OCI-LY7 (cell line): ENCODE measurements at regions of chr16 and their contacts with region 1.

Region 1: DNA sequence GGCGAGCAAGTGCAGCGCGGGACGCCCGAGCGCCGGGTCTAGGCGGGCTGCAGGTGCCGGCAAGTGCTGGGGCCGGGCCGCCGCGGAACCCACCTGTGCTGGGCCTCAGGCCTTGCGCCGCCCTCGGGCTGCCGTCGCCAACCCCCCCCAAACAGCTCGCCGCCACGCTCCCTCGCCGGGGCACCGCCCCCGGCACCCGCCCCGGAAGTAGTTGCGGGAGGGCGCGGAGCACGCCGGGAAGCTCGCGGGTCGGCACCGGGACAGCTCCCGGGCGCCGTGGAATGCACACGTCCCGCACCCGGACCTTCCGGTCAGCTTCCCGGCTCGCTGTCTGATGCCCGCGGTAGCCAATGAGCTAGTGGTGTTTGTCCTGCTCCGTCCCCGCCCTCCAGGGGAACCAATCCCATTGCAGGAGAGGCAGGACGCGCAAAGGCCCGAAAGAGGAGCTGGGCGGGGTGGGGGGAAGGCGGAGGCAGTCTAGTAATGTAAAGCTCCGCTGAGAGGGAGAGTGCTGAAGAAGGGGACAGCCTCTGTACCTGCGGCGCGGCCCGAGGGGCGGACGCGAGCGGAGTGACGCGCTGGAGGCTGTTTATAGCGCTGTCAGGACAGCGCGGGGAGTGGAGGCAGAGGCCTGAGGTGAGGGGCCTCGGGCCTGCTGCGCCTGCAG is at the starts of genes ANKS3 and DNAAF8:
- DNase-seq: peak; percentile 82
- H3K4me3 ChIP-seq: peak within 1 kb of the TSS; percentile 89
- H3K27ac ChIP-seq: peak within 1 kb of the TSS; percentile 64
- H3K4me1 ChIP-seq: peaks cover 15% of the 10 kb centered on the region
- CTCF ChIP-seq: no peak
- total RNA-seq, gene ANKS3: 17.6 and 19.5 TPM in 2 replicates
- total RNA-seq, gene DNAAF8: 0.36 and 0.38 TPM in 2 replicates

Region 2: DNA sequence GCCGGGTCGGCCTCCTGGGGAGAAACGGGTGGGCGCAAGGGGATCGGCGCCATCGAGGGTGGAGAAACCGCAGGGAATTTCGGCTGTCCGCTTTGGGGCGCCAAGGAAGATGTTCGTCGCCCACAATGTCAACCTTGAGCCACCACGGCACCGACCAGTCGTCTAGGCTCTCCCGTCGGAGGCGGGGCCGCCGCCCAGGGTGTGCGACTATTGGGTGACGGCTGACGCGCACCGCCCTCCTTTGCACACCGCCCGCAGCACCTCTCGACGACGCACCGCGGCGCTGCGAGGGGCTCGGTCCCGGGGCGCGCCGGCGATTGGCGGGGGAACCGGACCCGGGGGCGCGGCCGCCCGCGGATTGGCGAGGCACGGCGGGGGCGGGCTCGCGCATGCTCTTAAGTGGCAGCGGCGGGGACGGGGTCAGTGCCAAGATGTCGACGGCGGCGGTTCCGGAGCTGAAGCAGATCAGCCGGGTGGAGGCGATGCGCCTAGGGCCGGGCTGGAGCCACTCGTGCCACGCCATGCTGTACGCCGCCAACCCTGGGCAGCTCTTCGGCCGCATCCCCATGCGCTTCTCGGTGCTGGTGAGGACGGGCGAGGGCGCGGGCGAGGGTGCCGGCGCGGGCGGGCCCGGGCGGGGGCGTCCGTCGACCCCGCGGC is 40.8 kb before region 1 on chr16 and contains the start of gene NUDT16L1:
- CTCF ChIA-PET with region 1: no interaction called
- POLR2A ChIA-PET with region 1: no interaction called
- intact Hi-C with region 1: loop called (anchors 2 kb)
- DNase-seq: peak; percentile 97
- H3K4me3 ChIP-seq: peak within 1 kb of the TSS; percentile 90
- H3K27ac ChIP-seq: peak within 1 kb of the TSS; percentile 44
- H3K4me1 ChIP-seq: peaks cover 12% of the 10 kb centered on the region
- CTCF ChIP-seq: 0 out of 2 replicates have a peak, but pooled peaks have one; percentile 36
- total RNA-seq, gene NUDT16L1: 14.9 and 17.8 TPM in 2 replicates

Region 3: DNA sequence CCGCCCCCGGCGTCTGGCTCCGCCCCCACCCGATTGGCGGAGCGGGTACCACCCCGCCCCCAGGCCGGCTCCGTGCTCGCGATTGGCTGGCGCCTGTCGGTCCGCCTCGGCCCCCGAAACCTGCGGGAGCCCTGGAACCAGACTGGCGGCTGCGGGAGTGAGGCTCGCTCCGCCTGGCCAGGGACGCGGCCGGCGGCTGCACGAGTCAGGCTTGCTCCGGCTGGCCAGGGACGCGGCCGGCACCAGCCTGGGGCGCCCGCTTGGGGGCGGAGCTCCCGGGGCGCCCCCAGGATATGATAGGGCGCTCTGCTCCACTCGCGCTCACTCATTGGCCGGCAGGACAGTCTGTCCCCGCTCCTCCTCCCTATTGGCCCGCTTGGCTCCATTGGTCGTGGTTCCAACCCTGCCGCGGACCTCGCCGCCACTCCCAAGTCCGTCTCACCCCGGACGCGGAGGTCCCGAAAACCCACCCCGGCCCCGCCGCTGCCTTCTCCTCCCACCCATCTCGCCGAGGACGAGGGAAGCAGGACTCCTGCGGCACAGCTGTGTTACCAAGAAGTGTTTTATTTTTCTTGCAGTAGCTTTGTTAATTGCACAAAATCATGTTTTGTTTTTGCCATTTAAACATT is 68.6 kb after region 1 on chr16:
- CTCF ChIA-PET with region 1: interaction called, 3 read pairs
- POLR2A ChIA-PET with region 1: no interaction called
- intact Hi-C with region 1: loop called (anchors 2 kb)
- DNase-seq: peak; percentile 91
- H3K4me3 ChIP-seq: peak overlapping the region; percentile 78
- H3K27ac ChIP-seq: peak overlapping the region; percentile 59
- H3K4me1 ChIP-seq: peaks cover 26% of the 10 kb centered on the region
- CTCF ChIP-seq: no peak

Region 4: DNA sequence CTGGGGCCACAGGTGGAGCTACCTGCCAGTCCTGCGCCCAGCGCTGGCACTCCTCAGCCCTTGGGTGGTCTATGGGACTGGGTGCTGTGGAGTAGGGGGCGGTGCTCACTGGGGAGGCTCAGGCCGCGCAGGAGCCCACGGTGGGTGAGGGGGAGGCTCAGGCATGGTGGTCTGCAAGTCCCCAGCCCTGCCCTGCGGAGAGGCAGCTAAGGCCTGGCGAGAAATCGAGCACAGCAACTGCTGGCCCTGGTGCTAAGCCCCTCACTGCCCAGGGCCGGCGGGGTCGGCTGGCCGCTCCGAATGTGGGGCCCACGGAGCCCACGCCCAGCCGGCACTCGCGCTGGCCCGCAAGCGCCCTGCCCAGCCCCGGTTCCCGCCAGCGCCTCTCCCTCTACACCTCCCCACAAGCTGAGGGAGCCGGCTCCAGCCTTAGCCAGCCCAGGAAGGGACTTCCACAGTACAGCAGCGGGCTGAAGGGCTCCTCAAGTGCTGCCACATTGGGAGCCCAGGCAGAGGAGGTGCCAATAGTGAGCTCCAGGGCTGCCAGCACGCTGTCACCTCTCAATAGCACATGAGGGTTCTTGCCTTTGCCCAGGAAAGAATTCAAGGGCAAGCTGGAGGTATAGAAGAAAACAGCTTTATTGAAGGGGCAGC is 374.4 kb after region 1 on chr16:
- CTCF ChIA-PET with region 1: no interaction called
- POLR2A ChIA-PET with region 1: no interaction called
- intact Hi-C with region 1: no loop called
- DNase-seq: no peak
- H3K4me3 ChIP-seq: no peak overlapping the region
- H3K27ac ChIP-seq: no peak overlapping the region
- H3K4me1 ChIP-seq: no peaks in the 10 kb centered on the region
- CTCF ChIP-seq: no peak